ENCODE measurements at regions of chr3 and their contacts with region 1.

Region 1: DNA sequence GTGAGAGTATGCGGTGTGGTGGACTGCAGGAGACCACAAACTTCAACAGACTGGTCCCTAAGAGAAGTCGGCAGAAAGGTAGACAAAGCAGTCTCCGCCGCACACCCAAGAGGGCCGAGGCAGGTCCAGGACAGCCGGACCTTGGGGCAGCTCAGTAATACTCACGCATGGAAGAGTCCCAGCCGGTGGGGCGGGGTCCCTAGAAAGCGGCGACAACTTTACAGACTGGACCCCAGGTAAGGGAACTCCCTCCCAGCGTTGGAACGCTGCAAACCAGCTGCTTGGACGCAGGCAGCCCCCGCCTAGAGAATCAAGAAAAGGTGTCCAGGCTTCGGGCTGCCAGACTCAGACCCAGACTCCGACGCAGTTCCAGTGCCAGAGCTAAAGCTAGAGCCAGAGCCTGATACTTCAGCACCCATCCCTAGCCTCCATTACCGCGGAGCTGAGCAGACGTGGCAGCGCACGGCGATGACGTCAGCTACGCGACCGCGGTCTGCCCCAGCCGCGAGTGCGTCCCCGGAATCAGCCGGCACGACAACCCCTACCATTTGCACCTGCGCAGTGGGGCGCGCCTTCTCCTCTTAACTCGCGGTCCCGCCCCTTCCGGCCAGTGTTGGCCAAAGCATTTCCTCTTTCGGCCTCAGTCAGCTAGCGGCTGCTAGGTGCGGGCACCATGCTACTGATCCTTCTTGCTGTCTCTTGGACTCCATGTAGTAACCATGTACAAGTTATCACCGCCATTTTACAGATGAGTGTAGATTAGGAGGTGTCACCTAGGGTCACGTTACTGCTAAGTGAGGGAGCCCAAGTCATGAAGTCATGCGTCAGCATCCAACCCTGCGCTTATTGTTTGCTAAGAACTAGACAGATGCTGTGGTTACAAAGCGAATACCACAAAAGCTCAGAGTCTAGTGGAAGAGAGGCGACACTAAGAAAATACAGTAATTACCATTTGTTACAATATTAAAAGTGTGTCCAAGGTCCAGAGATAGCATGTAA is at the start of gene TMEM39A:
- DNase-seq: peak; percentile 100
- ATAC-seq: peak; percentile 98 to 99
- H3K4me3 ChIP-seq: peak within 1 kb of the TSS; percentile 81
- H3K27ac ChIP-seq: peak within 1 kb of the TSS; percentile 81
- H3K4me1 ChIP-seq: peaks cover 5% of the 10 kb centered on the region
- H3K27me3 ChIP-seq: no peaks in the 10 kb centered on the region
- total RNA-seq, gene TMEM39A: 18.4 to 36.0 (median 24.3) TPM

Region 2: DNA sequence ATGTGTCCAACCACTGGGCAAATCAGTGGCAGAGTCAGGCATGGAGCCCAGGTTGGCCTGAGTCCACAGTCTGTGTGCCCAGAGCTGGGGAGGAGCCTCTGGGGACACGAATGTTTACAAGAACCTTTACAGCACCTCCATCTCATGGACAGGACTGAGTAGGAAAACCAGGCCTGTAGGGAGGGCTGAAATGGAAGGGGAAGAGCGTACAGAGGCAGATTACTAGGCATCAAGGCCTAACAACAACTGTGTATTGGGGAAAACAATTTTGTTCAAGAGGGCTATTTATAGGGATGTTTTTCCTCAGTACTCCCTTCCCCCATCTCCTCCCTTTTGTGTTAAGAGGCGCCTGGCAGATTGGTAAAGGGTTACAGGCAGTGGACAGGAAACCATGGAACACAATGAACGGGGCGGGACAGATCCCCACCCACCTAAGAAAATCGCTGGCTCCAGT is 184.3 kb before region 1 on chr3:
- intact Hi-C with region 1: loop called in 1 of 4 experiments (anchors 10 kb)
- DNase-seq: peak; percentile 68 to 86 (median 83)
- ATAC-seq: peak; percentile 91 to 96
- H3K4me3 ChIP-seq: no peak overlapping the region
- H3K27ac ChIP-seq: peak overlapping the region; percentile 94
- H3K4me1 ChIP-seq: peaks cover 4% of the 10 kb centered on the region
- H3K27me3 ChIP-seq: no peaks in the 10 kb centered on the region

Region 3: DNA sequence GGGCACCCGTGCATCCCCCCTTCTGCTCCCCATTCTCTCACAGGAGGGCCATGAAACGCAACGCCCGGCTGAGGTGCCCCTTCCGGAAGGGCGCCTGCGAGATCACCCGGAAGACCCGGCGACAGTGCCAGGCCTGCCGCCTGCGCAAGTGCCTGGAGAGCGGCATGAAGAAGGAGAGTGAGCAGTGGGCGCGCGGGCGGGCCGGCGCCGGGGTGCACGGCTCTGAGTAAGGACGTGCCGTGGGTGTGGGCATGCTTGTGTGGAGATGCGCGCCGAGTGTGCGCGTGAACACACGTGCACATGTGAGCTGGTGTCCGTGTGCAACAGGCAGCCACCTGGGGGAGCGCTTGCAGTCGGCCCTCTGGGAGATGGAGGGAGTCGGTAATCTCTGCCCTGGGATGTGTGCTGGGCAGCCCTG is 346.6 kb after region 1 on chr3:
- intact Hi-C with region 1: no loop called
- DNase-seq: peak; percentile 27 to 70 (median 61)
- ATAC-seq: peak; percentile 69 to 75
- H3K4me3 ChIP-seq: peak overlapping the region; percentile 23
- H3K27ac ChIP-seq: no peak overlapping the region
- H3K4me1 ChIP-seq: no peaks in the 10 kb centered on the region
- H3K27me3 ChIP-seq: no peaks in the 10 kb centered on the region

Measured in right cardiac atrium (tissue), 5 donors.